Posterior vena cava (tissue), 2 donors: ENCODE measurements at regions of chr1 and their contacts with region 1.

Region 1: GRCh38 chr1:109239580-109240095 is 9.7 kb upstream of the CELSR2 start:
- DNase-seq: no peak

Region 2: DNA sequence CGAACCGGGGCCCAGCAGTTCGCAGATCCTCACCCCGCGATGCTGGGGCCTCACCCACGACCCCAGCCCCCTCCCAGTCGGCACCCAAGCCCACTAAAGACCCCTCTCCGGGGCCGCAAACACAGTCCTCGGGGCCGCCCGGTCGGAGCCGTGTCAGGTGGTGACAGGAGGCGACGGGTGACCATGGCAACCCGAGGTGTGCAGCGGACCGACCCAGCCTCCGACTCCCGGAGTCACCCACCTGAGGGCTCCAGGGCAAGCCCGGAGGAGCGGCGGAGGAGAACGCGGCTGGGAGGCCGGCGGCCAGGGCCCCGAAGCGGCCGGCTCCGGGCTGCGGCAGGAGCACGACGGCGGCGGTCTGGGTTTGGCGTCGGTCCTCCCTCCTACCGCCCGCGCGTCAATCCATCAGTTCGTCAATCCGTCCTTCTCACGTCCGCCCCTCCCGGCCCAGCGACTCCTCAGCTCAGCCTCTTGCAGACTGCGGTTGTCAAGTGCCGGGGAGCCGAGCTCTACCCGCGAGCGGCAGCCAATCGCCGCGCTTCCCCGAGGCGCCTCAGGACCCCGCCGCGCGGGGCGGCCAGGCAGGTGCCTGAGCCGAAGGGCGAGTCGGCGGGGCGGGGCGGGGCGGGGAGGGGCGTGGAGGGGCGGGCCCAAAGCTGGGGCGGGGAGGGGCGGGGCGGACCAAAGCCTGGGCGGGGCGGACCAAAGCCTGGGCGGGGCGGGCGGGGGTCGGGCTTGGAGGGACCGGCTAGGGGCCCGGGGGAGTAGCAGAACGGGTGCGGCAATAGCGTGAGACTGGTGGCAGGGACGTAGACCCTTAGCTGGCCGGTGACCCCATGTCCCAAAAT is 197.8 kb before region 1 on chr1 and contains the start of gene WDR47:
- intact Hi-C with region 1: no loop called
- DNase-seq: peak; percentile 98
- total RNA-seq, gene WDR47: 18.6 to 21.2 TPM

Region 3: GRCh38 chr1:109254953-109255651 is 15.5 kb after region 1 on chr1:
- intact Hi-C with region 1: loop called in 1 of 2 experiments (anchors 1 kb)
- DNase-seq: peak; percentile 48

Region 4: DNA sequence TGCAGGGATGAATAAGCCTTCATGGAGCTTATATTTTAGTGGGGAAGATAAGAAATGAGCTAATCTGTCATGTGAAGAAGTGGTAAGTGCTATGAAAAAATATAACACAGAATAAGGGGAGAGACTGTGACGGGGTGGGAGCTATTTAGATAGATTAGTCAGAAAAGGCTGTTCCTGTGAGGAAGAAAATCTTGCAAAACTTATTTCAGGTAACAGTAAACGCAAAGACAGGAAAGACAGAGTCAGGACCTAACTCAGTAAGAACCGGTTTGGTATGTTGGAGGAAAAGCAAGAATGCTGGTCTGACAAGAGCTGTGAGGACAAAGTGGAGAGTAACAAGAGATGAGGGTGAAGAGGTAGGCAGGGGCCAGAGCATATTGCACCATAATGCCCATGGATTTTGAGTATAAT is 330.8 kb after region 1 on chr1:
- intact Hi-C with region 1: no loop called
- DNase-seq: no peak